Left colon (tissue), 2 donors: ENCODE measurements at regions of chr15 and their contacts with region 1.

Region 1: DNA sequence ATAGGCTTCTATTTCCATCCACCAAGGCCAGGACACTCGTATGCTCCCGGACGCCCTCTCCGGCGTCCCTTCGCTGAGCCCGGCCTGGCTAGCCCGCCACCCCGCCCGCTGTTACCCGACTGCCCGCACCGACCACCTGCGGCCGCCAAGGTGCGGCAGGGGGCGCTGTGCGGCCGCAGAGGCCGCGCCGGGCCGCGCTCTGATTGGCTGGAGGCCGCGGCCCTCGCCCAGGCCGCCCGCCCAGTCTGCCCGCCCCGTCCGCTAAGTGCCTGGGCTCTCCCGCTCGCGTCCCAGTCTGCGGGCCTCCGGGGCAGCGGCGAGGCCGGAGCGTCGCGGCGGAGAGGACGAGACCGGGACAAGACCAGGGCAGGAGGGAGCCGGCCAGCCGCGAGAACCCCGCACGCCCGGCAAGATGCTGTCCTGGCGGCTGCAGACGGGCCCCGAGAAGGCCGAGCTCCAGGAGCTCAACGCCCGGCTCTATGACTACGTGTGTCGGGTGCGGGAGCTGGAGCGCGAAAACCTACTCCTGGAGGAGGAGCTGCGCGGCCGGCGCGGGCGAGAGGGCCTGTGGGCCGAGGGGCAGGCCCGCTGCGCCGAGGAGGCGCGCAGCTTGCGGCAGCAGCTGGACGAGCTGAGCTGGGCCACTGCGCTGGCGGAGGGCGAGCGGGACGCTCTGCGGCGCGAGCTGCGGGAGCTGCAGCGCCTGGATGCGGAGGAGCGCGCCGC is at the start of gene SYNM:
- DNase-seq: peak; percentile 69 to 70
- ATAC-seq: peak; percentile 91
- total RNA-seq, gene SYNM: 5.2 to 96.5 TPM

Region 2: DNA sequence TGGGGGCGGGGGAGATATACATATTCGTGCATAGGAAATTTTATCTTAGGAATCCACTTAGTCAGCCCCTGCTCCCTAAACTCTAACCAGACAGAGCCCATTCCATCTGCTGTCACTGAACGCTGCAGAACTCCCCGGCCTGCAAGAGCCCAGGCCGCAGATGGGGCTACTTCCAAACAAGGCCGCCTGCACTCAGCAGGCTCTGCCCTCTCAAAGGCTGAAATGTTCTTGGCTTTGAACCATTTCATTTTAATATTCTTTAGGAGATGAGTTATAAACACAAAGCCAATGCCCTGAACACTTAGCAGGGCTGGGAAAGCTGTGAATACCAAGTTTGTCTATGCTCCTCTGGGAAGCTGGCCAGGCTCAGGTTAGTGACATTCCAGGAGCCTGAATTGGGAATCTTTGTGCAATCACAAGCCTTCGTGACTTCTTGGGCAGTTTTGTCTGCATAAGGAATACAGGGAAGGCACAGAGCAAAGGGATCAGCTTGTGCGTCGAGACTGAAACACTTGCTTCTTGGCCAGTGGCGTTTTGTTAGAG is 64.9 kb after region 1 on chr15:
- intact Hi-C with region 1: loop called in 1 of 2 experiments (anchors 10 kb)
- DNase-seq: peak in 1 of 2 donors; percentile 72
- ATAC-seq: peak; percentile 44

Region 3: DNA sequence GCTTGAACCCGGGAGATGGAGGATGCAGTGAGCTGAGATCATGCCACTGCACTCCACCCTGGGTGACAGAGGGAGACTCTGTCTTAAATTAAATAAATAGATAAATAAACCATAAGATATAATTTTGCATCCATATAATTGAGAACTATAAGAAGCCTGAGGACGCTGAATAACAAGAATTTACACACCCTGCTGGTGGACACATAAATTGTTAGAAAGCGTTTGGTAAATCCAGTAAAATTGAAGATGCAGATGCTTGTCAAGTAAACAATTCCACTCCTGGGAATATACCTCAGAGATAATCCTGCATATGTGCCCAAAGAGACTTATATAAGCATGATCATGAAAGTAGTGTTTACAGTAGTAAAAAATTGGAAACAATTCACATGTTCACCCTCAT is 102.7 kb after region 1 on chr15:
- intact Hi-C with region 1: loop called (anchors 5 kb)
- DNase-seq: no peak
- ATAC-seq: no peak

Region 4: GRCh38 chr15:99213187-99213811 is 108.3 kb after region 1 on chr15:
- intact Hi-C with region 1: loop called (anchors 5 kb)
- DNase-seq: peak; percentile 62 to 87
- ATAC-seq: peak; percentile 87